Activated T-helper 1 cell treated with anti-CD3 and anti-CD28 coated beads, Interleukin-12 subunit alpha, Interleukin-12 subunit beta, Interleukin-2, Interleukin-4 antibody, amounts not matched to agents 30 ng/mL and 10 ng/mL and 1 ng/mL, durations not matched to agents 14 hours and 24 hours and 36 hours (primary cell): ENCODE measurements at regions of chr19 and their contacts with region 1.

Region 1: GRCh38 chr19:46513461-46514236 is 18.0 kb upstream of the PNMA8B start:
- DNase-seq: peak; percentile 66
- H3K4me3 Mint-ChIP-seq: no peak overlapping the region
- H3K27ac Mint-ChIP-seq: no peak overlapping the region
- H3K4me1 Mint-ChIP-seq: peaks cover 12% of the 10 kb centered on the region
- H3K27me3 Mint-ChIP-seq: peaks cover 27% of the 10 kb centered on the region

Region 2: DNA sequence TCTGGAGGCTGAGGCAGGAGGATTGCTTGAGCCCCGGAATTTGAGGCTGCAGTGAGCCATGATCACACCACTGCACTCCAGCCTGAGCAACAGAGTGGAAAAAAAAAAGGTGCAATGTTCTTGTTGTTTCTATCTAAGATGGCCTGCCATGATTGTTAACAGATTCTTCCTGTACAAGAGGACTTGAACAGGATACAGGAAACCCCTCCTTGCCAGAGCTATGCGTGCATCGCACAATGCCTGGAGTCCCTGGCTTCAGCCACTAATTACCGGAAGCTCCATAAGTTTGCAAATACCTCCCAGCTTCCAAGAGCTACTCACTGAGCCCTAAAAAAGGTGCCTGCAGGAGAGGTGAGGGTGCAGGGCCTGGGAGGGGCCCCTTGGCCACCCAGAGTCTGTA is 229.9 kb before region 1 on chr19:
- intact Hi-C with region 1: loop called (anchors 1 kb)
- DNase-seq: no peak
- H3K4me3 Mint-ChIP-seq: no peak overlapping the region
- H3K27ac Mint-ChIP-seq: no peak overlapping the region
- H3K4me1 Mint-ChIP-seq: no peaks in the 10 kb centered on the region
- H3K27me3 Mint-ChIP-seq: peaks cover 6% of the 10 kb centered on the region

Region 3: DNA sequence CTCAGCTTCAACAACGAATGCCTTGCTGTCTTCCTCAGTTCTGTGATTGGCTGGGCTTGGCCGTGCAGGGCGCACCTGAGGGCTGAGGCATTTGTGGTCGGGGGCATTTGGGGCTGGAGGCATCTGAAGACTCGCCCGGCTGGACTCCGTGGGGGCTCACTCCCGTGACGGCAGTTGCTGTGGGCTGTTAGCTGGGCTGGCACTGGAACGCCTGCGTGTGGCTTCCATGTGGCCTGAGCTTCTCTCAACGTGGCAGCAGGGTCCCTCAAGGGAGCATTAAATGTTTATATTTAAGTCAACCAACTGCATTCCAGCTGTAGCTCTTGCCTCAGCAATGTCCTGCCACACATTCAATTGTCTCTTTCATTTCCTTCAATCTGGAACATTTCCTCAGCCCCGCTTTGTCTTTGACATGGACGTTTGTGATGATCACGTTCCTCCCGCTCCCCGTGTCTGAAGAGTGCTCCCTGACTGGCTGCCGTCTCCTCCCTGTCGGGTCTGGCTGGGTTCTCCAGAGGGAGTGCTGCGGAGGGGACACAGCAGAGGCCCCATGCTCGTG is 121.3 kb before region 1 on chr19:
- intact Hi-C with region 1: loop called (anchors 1 kb)
- DNase-seq: no peak
- H3K4me3 Mint-ChIP-seq: no peak overlapping the region
- H3K27ac Mint-ChIP-seq: no peak overlapping the region
- H3K4me1 Mint-ChIP-seq: peaks cover 10% of the 10 kb centered on the region
- H3K27me3 Mint-ChIP-seq: no peaks in the 10 kb centered on the region

Region 4: GRCh38 chr19:46466536-46467196 is 47.0 kb before region 1 on chr19:
- intact Hi-C with region 1: no loop called
- DNase-seq: no peak
- H3K4me3 Mint-ChIP-seq: no peak overlapping the region
- H3K27ac Mint-ChIP-seq: no peak overlapping the region
- H3K4me1 Mint-ChIP-seq: no peaks in the 10 kb centered on the region
- H3K27me3 Mint-ChIP-seq: peaks cover 16% of the 10 kb centered on the region

Region 5: GRCh38 chr19:46542428-46543230 is 29.0 kb after region 1 on chr19:
- intact Hi-C with region 1: loop called (anchors 1 kb)
- DNase-seq: peak; percentile 51
- H3K4me3 Mint-ChIP-seq: no peak overlapping the region
- H3K27ac Mint-ChIP-seq: no peak overlapping the region
- H3K4me1 Mint-ChIP-seq: peaks cover 9% of the 10 kb centered on the region
- H3K27me3 Mint-ChIP-seq: peaks cover 7% of the 10 kb centered on the region